ENCODE measurements at regions of chr3 and their contacts with region 1.

Region 1: DNA sequence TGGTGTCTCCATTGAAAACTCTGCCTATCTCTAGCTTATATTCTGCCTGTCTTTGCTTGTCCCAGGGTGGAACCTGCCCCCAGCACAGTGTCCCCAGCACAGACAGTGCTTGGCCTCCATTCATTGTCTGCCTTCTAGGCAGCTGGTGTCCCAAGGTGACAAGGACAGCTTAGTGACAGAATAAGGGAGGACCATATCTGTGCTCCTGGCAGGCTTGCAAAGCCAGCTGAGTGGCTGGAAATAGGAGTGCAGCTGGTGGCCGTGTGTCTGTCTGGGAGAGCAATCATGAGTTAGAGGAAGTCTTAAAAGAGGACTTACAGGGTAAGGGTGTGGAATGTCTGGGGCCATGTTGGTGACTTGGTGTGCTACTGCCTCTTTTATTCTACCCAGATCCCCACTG is 33.4 kb downstream of the SCN5A start:
- DNase-seq: peak; percentile 77

Region 2: GRCh38 chr3:38627956-38628355 is 11.8 kb after region 1 on chr3:
- intact Hi-C with region 1: no loop called
- DNase-seq: no peak

Region 3: DNA sequence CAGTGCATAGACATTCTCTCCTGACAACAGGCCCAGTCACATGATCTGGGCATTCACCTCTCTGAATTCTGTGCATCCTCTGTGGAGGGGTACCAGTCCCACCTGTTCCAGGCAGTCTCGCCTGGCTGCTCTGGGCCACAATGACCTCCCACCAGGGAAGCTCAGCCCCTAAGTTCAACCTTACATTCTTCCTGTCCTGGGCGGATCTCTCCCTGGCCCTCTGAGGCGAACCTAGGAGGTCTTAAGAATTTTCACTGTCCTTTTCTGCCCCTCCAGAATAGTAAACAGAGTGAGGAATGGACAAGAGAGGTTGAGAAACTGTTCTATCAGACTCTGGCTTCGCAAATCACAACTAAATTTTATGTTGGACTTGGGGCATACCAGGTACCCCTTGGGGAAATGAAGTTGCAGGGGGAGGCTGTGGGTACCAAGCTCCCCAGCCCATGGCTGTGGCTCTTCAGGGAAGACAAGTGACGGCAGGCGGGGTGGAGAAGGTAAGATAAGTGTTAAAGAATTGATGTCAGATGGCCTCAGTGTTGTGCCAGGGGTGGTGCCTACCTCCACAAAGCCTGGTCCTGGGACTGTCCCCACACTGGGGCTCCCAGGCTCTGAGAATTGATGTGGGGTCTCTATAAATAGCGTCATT is 28.0 kb after region 1 on chr3:
- intact Hi-C with region 1: loop called (anchors 2 kb)
- DNase-seq: peak; percentile 70

Region 4: GRCh38 chr3:38793721-38794120 is 177.6 kb after region 1 on chr3:
- intact Hi-C with region 1: no loop called
- DNase-seq: no peak

Region 5: GRCh38 chr3:39067286-39067685 is 451.2 kb after region 1 on chr3:
- intact Hi-C with region 1: no loop called
- DNase-seq: no peak